HEK293T (cell line): ENCODE measurements at regions of chr1 and their contacts with region 1.

Region 1: GRCh38 chr1:235367000-235367908 is at the start of gene TBCE:
- DNase-seq: peak; percentile 99

Region 2: GRCh38 chr1:234907940-234908405 is 459.3 kb before region 1 on chr1:
- CTCF ChIA-PET with region 1: no interaction called
- POLR2A ChIA-PET with region 1: no interaction called
- DNase-seq: no peak

Region 3: DNA sequence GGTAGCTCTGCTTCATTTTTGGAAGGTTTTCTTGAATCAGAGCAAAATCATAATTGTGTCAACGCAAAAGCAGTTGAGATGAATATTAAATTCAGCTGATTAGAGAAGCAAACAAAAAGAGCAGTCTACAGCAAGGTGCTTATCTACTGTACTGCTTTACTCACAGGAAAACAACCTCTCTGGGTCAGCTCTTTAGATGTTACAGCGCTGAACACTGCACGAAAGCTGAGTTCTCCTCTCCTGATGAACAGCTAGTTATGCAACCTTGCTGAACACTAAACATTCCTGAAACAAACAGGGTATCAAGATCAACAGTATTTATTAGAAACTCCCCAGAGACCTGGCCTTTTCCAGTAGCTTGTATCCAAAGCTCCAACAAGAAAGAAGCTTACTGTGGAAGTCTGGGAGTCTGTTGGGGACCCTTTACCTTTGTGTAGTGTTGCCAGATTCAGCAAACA is 41.3 kb after region 1 on chr1:
- CTCF ChIA-PET with region 1: interaction called, 3 read pairs
- POLR2A ChIA-PET with region 1: interaction called, 11 read pairs
- DNase-seq: no peak

Region 4: GRCh38 chr1:235468970-235469369 is 101.7 kb after region 1 on chr1:
- CTCF ChIA-PET with region 1: no interaction called
- POLR2A ChIA-PET with region 1: no interaction called
- DNase-seq: no peak